ENCODE measurements at regions of chr21 and their contacts with region 1.

Region 1: DNA sequence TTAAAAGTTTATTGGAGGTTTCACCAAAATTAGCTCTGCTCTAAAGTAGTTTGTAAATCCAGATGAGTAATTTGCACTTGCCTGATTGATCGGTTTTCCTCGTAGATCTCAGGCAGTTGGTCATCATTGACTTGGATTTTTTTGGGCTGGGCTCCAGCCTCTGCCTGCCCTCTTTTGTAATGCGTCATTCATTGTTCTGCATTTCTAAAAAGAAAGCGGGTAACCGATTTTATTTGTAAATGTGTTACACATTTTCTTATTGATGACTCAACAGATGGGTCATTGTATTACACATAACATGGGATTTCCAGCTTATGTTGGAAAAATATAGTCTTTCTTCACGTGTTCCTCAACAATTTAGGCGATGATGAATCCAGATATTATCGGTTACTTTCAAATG is 5.5 kb downstream of the ETS2 start:
- DNase-seq: peak; percentile 99
- ATAC-seq: peak; percentile 41
- H3K4me3 ChIP-seq: peak overlapping the region; percentile 25; the same call in 1 of the 2 replicates
- H3K27ac ChIP-seq: peak overlapping the region; percentile 98
- H3K4me1 ChIP-seq: peaks cover 76% of the 10 kb centered on the region
- H3K27me3 ChIP-seq: no peaks in the 10 kb centered on the region
- CTCF ChIP-seq: no peak

Region 2: DNA sequence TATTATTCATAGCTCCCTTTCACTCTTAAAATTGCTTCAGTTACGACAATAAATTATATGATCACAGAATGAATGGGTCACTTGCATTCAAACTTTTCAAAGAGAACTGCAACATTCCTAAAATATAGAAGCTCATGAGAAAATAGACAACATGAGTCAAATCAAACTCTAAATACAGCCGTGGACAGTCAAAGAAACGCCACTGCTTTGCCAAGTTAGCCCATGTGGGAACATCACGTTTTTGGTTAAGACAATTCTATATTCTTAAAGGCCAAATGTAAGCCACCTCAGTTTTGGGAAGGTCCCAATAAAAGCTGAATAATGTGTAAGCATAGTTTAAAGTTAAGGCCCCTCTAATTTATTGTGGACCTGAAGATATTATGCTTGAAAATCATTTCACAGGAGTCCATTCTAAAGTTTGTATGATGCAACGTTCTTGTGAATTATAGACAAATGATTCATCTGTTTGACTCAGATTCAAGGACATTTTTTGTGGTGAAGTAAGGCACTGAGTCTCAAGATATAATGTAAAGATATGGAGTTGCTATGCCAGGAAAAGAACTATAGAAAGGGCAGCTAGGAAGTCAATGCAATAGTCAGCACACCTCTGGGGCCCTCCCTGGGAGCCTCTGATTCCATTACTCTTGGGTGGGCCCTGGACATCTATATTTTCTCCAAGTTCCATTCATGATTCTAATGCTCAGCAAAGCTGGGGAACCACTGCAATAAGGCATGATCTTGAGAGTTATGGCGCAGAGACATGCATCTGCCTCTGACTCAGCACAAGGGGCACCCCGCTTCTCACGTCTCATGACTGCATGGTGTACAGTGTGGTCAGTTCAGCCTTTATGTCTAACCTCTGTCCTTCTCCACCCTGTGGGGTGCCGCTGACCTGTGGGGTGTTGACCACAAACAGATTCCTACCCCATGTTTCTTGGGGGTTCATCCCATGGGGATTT is 28.4 kb after region 1 on chr21:
- CTCF ChIA-PET with region 1: interaction called, 5 read pairs
- POLR2A ChIA-PET with region 1: interaction called, 4 read pairs
- intact Hi-C with region 1: loop called (anchors 1 kb)
- DNase-seq: peak; percentile 95
- ATAC-seq: peak; percentile 92
- H3K4me3 ChIP-seq: 0 out of 2 replicates have a peak overlapping the region, but pooled peaks have one; percentile 15
- H3K27ac ChIP-seq: peak overlapping the region; percentile 85
- H3K4me1 ChIP-seq: peaks cover 38% of the 10 kb centered on the region
- H3K27me3 ChIP-seq: no peaks in the 10 kb centered on the region
- CTCF ChIP-seq: no peak

Region 3: DNA sequence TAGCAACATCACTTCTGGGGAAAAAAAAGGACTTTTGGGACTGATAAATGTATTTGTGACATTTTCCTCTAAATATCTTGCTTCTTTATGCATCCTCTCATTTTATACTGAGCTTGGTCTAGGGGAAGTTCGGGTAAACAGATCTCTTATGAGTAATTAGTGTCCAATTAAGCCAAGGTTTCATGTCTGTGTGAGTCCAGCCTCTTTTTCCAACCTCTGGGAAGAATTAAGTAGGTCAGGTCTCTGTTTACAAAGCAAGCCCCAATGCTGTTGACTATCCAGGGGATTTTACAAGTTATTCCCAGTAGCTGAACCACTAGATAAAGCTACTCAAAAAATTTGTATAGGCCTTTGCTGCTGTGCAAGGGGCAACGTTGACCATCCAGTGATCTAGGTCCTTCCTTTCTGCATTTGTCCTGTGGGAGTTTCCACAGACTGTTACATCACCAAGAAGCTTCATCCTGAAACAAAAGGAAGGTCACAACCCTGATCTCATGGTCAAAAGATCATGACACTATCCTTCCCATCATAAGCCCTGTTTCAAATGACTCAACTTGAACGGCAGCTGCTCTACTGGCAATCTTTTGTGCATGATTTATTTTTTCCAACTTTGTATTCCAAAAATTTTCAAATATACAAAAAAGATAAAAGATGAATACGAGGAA is 68.8 kb after region 1 on chr21:
- CTCF ChIA-PET with region 1: no interaction called
- POLR2A ChIA-PET with region 1: interaction called, 4 read pairs
- intact Hi-C with region 1: loop called (anchors 1 kb)
- DNase-seq: no peak
- ATAC-seq: no peak
- H3K4me3 ChIP-seq: no peak overlapping the region
- H3K27ac ChIP-seq: no peak overlapping the region
- H3K4me1 ChIP-seq: peaks cover 7% of the 10 kb centered on the region; the same call in 1 of the 2 replicates
- H3K27me3 ChIP-seq: no peaks in the 10 kb centered on the region
- CTCF ChIP-seq: no peak

Region 4: DNA sequence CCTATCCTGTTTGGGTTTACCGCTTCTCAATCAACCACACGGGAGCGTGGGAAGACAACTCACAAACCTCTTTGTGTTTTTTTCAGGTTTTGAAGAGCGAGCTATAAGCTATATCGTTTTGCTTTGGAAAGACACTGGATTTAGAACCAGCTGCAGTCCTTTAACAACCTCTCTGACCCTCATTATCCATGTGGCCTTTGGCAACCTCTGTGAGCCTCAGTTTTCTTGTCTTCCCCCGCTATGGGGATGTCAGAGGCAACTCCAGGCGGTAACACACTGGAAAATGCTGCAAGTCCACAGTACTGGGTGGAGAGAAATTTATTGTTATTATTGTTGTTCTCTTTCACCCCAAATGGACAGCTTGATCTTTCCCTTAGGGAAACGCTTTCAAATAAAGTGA is 94.5 kb after region 1 on chr21:
- CTCF ChIA-PET with region 1: interaction called, 4 read pairs
- POLR2A ChIA-PET with region 1: no interaction called
- intact Hi-C with region 1: loop called (anchors 2 kb)
- DNase-seq: no peak
- ATAC-seq: no peak
- H3K4me3 ChIP-seq: no peak overlapping the region
- H3K27ac ChIP-seq: no peak overlapping the region
- H3K4me1 ChIP-seq: peaks cover 24% of the 10 kb centered on the region
- H3K27me3 ChIP-seq: no peaks in the 10 kb centered on the region
- CTCF ChIP-seq: no peak

Region 5: DNA sequence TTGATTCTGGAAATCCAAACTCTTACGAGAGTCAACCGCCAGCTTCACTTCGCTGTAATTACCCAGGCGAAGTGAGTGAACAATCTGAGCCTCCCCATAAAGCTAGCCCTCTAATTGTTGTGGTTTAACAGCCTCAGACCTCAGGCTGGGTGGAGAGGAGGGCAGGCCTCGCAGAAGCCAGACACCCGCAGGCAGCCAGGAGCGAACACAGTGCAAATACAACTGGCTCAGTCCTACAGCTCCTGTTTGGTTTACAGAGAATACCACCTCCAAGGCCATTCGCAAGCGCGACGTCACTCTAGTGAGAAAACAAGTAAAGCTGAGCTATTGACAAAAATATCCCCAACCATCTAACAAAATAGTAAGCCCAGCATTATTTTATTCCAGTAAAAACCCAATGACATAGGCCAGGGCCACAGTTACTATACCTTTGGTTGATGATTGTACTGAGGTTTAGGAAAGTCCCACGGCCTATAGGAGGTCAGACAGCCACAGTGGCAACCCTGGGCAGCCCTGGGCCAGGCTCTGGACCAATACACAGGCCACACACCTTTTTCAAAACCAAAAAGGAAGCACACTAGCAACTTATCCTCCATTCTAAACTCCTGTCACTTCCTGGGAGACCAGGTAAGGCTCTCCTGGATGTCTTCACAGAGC is 157.8 kb after region 1 on chr21:
- CTCF ChIA-PET with region 1: no interaction called
- POLR2A ChIA-PET with region 1: no interaction called
- intact Hi-C with region 1: no loop called
- DNase-seq: no peak
- ATAC-seq: no peak
- H3K4me3 ChIP-seq: no peak overlapping the region
- H3K27ac ChIP-seq: no peak overlapping the region
- H3K4me1 ChIP-seq: no peaks in the 10 kb centered on the region
- H3K27me3 ChIP-seq: no peaks in the 10 kb centered on the region
- CTCF ChIP-seq: no peak

Region 6: DNA sequence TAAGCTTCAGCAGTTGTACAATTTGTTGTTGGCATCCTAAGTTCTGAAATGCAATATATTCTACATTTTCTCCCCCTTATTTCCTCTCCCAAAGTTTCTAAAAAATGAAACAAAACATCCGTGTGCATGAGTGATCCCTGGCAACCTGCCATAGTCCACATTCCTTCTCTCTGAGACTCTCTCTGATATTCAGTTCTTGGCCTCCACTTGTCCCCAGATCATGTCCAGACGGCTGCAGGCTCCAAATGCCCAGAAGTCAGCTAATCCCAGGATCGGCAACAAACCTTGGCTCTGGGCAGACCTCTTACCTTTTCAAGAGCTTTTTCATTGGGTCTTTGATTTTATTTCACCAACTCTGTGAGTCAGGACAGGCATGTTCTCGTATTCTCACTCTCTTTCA is 182.3 kb after region 1 on chr21:
- CTCF ChIA-PET with region 1: no interaction called
- POLR2A ChIA-PET with region 1: no interaction called
- intact Hi-C with region 1: loop called (anchors 2 kb)
- DNase-seq: peak; percentile 94
- ATAC-seq: peak; percentile 74
- H3K4me3 ChIP-seq: no peak overlapping the region
- H3K27ac ChIP-seq: no peak overlapping the region
- H3K4me1 ChIP-seq: peaks cover 27% of the 10 kb centered on the region
- H3K27me3 ChIP-seq: no peaks in the 10 kb centered on the region
- CTCF ChIP-seq: no peak

Measured in PC-3 (cell line).